ENCODE measurements at regions of chr16 and their contacts with region 1.

Region 1: GRCh38 chr16:75198135-75198600 is 8.8 kb downstream of the CTRB2 start:
- DNase-seq: no peak
- ATAC-seq: no peak
- H3K4me3 ChIP-seq: no peak overlapping the region
- H3K27ac ChIP-seq: no peak overlapping the region
- H3K4me1 ChIP-seq: peaks cover 3% of the 10 kb centered on the region; the same call in 1 of the 2 replicates
- H3K27me3 ChIP-seq: peaks cover 1 to 4% of the 10 kb centered on the region in 2 experiments
- CTCF ChIP-seq: no peak
- EP300 ChIP-seq: no peak
- POLR2A ChIP-seq: no peak
- RAD21 ChIP-seq: no peak

Region 2: GRCh38 chr16:73354434-73354833 is 1843.7 kb before region 1 on chr16:
- CTCF ChIA-PET with region 1: no interaction called
- POLR2A ChIA-PET with region 1: no interaction called
- RAD21 ChIA-PET with region 1: no interaction called
- SMC1A ChIA-PET with region 1: no interaction called
- in situ Hi-C with region 1: no loop called
- intact Hi-C with region 1: no loop called
- DNase-seq: no peak
- ATAC-seq: no peak
- H3K4me3 ChIP-seq: no peak overlapping the region
- H3K27ac ChIP-seq: no peak overlapping the region
- H3K4me1 ChIP-seq: no peaks in the 10 kb centered on the region
- H3K27me3 ChIP-seq: no peaks in the 10 kb centered on the region
- CTCF ChIP-seq: no peak
- EP300 ChIP-seq: no peak
- POLR2A ChIP-seq: no peak
- RAD21 ChIP-seq: no peak

Region 3: DNA sequence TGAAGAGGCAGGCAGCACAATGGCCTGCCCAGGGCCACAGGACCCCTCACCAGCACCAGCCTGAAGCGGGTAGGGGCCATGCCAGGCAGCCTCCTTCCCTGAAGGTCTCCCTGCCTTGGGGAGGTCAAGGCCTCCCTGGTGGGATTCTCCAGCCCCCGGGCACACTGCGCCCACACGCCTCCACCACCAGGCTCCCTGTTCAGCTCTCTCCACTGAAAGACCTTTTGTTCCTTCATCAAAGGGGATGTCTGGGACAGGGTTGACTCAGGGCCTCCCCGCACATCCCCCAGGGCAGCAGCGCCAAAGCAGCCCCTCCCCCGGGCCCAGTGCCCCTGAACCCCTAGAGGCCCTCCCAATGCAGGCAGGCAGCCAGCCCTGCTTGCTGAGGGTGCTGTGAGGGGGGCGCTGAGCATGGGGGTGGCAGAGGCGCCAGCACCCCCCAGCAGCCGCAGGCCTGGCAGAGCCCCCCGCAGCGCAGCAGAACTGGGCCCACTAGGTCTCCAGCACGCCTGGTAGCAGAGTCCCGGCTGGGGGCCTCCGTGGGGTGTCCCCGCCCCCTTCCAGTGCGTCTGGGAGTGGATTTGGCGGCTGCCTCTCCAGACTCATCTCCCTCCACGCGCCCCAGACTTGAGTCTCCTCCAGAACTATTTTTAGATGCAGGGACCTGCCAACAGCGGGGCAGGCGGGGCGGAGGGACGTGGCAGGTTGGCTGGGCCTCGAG is 40.1 kb after region 1 on chr16:
- CTCF ChIA-PET with region 1: interaction called, 79 read pairs
- POLR2A ChIA-PET with region 1: no interaction called
- RAD21 ChIA-PET with region 1: interaction called, 17 read pairs
- SMC1A ChIA-PET with region 1: interaction called, 7 read pairs
- in situ Hi-C with region 1: no loop called
- intact Hi-C with region 1: loop called (anchors 5 kb)
- DNase-seq: no peak
- ATAC-seq: no peak
- H3K4me3 ChIP-seq: no peak overlapping the region
- H3K27ac ChIP-seq: no peak overlapping the region
- H3K4me1 ChIP-seq: no peaks in the 10 kb centered on the region
- H3K27me3 ChIP-seq: no peaks in the 10 kb centered on the region
- CTCF ChIP-seq: no peak
- EP300 ChIP-seq: no peak
- POLR2A ChIP-seq: no peak
- RAD21 ChIP-seq: no peak

Region 4: DNA sequence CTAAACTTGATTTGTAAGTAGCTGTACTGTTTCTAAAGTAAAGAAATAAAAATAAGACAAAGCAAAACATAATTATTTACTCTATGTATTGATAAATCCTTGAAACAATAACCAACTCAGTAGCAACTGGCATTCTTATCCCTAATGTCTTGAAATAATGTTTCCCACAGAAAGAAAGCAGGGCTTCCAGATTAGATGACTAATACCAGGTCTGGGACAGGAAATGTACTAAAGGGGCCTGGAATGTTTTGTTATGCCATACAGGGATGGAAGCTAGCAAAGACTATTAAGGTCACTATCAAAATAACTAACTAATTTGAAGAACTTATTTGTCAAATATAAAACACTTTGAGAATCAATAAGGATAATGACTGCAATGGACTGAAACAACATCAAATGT is 153.0 kb after region 1 on chr16:
- CTCF ChIA-PET with region 1: interaction called, 14 read pairs
- POLR2A ChIA-PET with region 1: no interaction called
- RAD21 ChIA-PET with region 1: no interaction called
- SMC1A ChIA-PET with region 1: interaction called, 7 read pairs
- in situ Hi-C with region 1: no loop called
- intact Hi-C with region 1: no loop called
- DNase-seq: no peak
- ATAC-seq: no peak
- H3K4me3 ChIP-seq: no peak overlapping the region
- H3K27ac ChIP-seq: no peak overlapping the region
- H3K4me1 ChIP-seq: no peaks in the 10 kb centered on the region
- H3K27me3 ChIP-seq: no peaks in the 10 kb centered on the region
- CTCF ChIP-seq: no peak
- EP300 ChIP-seq: no peak
- POLR2A ChIP-seq: no peak
- RAD21 ChIP-seq: no peak

Region 5: DNA sequence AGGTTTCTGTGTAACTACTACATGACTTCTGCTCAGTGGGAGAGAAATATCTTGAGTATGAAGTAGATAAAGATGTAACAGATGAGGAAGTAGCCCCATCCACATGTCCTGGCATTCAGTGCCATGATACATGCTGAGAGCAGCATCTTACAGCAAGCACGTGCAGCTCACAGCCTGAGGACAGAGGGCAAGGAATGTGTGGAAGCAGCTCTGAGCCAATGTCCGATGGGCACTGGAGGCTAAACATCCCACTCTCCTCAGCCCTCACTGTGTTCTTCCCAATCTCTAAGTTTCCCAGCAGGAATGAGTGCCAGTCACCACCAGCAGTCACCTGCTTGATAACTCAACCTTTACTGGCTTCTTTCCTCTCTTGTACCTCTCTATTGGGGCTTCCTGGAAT is 194.7 kb after region 1 on chr16:
- CTCF ChIA-PET with region 1: interaction called, 170 read pairs
- POLR2A ChIA-PET with region 1: no interaction called
- RAD21 ChIA-PET with region 1: interaction called, 9 read pairs
- SMC1A ChIA-PET with region 1: interaction called, 52 read pairs
- in situ Hi-C with region 1: loop called (anchors 5 kb)
- intact Hi-C with region 1: no loop called
- DNase-seq: no peak
- ATAC-seq: no peak
- H3K4me3 ChIP-seq: no peak overlapping the region
- H3K27ac ChIP-seq: no peak overlapping the region
- H3K4me1 ChIP-seq: no peaks in the 10 kb centered on the region
- H3K27me3 ChIP-seq: no peaks in the 10 kb centered on the region
- CTCF ChIP-seq: no peak
- EP300 ChIP-seq: no peak
- POLR2A ChIP-seq: no peak
- RAD21 ChIP-seq: no peak

Region 6: GRCh38 chr16:75464130-75464918 is 266.2 kb after region 1 on chr16 and contains the start of gene TMEM170A:
- CTCF ChIA-PET with region 1: interaction called, 20 read pairs
- POLR2A ChIA-PET with region 1: no interaction called
- RAD21 ChIA-PET with region 1: interaction called, 14 read pairs
- SMC1A ChIA-PET with region 1: interaction called, 5 read pairs
- in situ Hi-C with region 1: no loop called
- intact Hi-C with region 1: loop called (anchors 1 kb)
- DNase-seq: peak; percentile 94
- ATAC-seq: peak; percentile 96
- H3K4me3 ChIP-seq: peak within 1 kb of the TSS; percentile 89
- H3K27ac ChIP-seq: peak within 1 kb of the TSS; percentile 85
- H3K4me1 ChIP-seq: peaks cover 6% of the 10 kb centered on the region
- H3K27me3 ChIP-seq: no peaks in the 10 kb centered on the region
- CTCF ChIP-seq: peak; percentile 100; a peak in 5 of 6 replicates
- EP300 ChIP-seq: no peak
- POLR2A ChIP-seq: peak; percentile 96
- RAD21 ChIP-seq: peak; percentile 67
- polyA plus RNA-seq, gene TMEM170A: 7.3 to 7.8 TPM

Region 7: GRCh38 chr16:75764154-75764768 is 566.1 kb after region 1 on chr16:
- CTCF ChIA-PET with region 1: interaction called, 13 read pairs
- POLR2A ChIA-PET with region 1: no interaction called
- RAD21 ChIA-PET with region 1: interaction called, 11 read pairs
- SMC1A ChIA-PET with region 1: interaction called, 9 read pairs
- in situ Hi-C with region 1: no loop called
- intact Hi-C with region 1: loop called (anchors 2 kb)
- DNase-seq: peak; percentile 53
- ATAC-seq: peak; percentile 90
- H3K4me3 ChIP-seq: no peak overlapping the region
- H3K27ac ChIP-seq: no peak overlapping the region
- H3K4me1 ChIP-seq: peaks cover 5% of the 10 kb centered on the region
- H3K27me3 ChIP-seq: no peaks in the 10 kb centered on the region; a peak in 1 of 4 replicates
- CTCF ChIP-seq: peak; percentile 80 to 91 (median 91)
- EP300 ChIP-seq: no peak
- POLR2A ChIP-seq: no peak
- RAD21 ChIP-seq: peak; percentile 98